ENCODE measurements at regions of chr16 and their contacts with region 1.

Region 1: DNA sequence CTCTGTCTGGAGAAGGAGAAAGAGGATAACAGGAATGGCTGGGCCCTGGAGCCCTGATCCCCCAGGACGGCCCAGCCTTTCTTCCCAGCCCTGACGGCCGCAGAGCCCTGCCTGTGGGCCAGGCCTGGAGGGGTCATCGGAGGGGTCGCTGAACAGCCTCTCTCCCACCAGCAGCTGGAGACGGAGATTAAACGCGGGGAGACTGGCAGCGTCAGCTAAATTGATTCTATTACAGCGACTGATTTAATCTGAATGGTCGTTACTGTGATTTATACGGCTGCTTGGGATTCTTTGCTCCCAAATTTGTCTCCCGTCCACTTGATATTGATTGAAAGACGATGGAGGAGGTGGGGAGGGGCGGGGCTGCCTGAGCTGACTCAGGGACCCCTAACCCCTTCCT is 7.1 kb upstream of the CDH15 start:
- DNase-seq: no peak
- ATAC-seq: no peak
- H3K4me3 ChIP-seq: no peak overlapping the region
- H3K4me3 Mint-ChIP-seq: no peak overlapping the region
- H3K27ac ChIP-seq: no peak overlapping the region
- H3K27ac Mint-ChIP-seq: no peak overlapping the region
- H3K4me1 ChIP-seq: peaks cover 3 to 12% of the 10 kb centered on the region in 2 experiments
- H3K4me1 Mint-ChIP-seq: peaks cover 0 to 5% (median 0%) of the 10 kb centered on the region in 3 donors
- H3K27me3 ChIP-seq: peaks cover 0 to 33% of the 10 kb centered on the region in 2 experiments
- H3K27me3 Mint-ChIP-seq: peaks cover 0 to 5% of the 10 kb centered on the region in 2 donors

Region 2: GRCh38 chr16:88943741-88944140 is 220.7 kb before region 1 on chr16:
- CTCF ChIA-PET with region 1: interaction called in 1 of 2 experiments, 10 read pairs
- POLR2A ChIA-PET with region 1: no interaction called
- DNase-seq: no peak
- ATAC-seq: no peak
- H3K4me3 ChIP-seq: no peak overlapping the region
- H3K4me3 Mint-ChIP-seq: no peak overlapping the region
- H3K27ac ChIP-seq: no peak overlapping the region
- H3K27ac Mint-ChIP-seq: no peak overlapping the region
- H3K4me1 ChIP-seq: peaks cover 14 to 27% of the 10 kb centered on the region in 2 experiments
- H3K4me1 Mint-ChIP-seq: peaks cover 7 to 11% (median 9%) of the 10 kb centered on the region in 3 donors
- H3K27me3 ChIP-seq: peaks cover 0 to 51% of the 10 kb centered on the region in 2 experiments
- H3K27me3 Mint-ChIP-seq: peaks cover 8 to 37% of the 10 kb centered on the region in 2 donors